Dorsolateral prefrontal cortex (tissue), 120 donors: ENCODE measurements at regions of chr6 and their contacts with region 1.

Region 1: GRCh38 chr6:36759148-36759759 is 61.6 kb downstream of the RAB44 start:
- DNase-seq: peak; percentile 73 to 89 (median 82)
- H3K4me3 ChIP-seq: no peak overlapping the region
- H3K27ac ChIP-seq: peak overlapping the region in 21 of 59 donors; percentile 5 to 98 (median 93)
- H3K27me3 ChIP-seq: no peaks in the 10 kb centered on the region
- CTCF ChIP-seq: peak; percentile 78 to 98 (median 95)

Region 2: GRCh38 chr6:36546920-36547645 is 212.2 kb before region 1 on chr6 and contains the start of gene STK38:
- intact Hi-C with region 1: loop called in 1 of 2 experiments (anchors 5 kb)
- DNase-seq: peak; percentile 72 to 91 (median 84)
- H3K4me3 ChIP-seq: peak within 1 kb of the TSS; percentile 58 to 100 (median 96)
- H3K27ac ChIP-seq: peak within 1 kb of the TSS; percentile 88 to 100 (median 97)
- H3K27me3 ChIP-seq: no peaks in the 10 kb centered on the region
- CTCF ChIP-seq: peak in 39 of 56 donors; percentile 3 to 63 (median 37)
- total RNA-seq, gene STK38: 6.3 to 23.4 (median 13.6) TPM

Region 3: GRCh38 chr6:36623547-36624459 is 135.5 kb before region 1 on chr6:
- intact Hi-C with region 1: loop called (anchors 5 kb)
- DNase-seq: peak; percentile 59 to 83 (median 78)
- H3K4me3 ChIP-seq: no peak overlapping the region
- H3K27ac ChIP-seq: peak overlapping the region in 21 of 59 donors; percentile 10 to 73 (median 55)
- H3K27me3 ChIP-seq: no peaks in the 10 kb centered on the region
- CTCF ChIP-seq: peak; percentile 71 to 94 (median 88)

Region 4: GRCh38 chr6:36720251-36721141 is 38.8 kb before region 1 on chr6:
- intact Hi-C with region 1: no loop called
- DNase-seq: peak in 2 of 10 donors; percentile 2 to 31
- H3K4me3 ChIP-seq: no peak overlapping the region
- H3K27ac ChIP-seq: no peak overlapping the region
- H3K27me3 ChIP-seq: no peaks in the 10 kb centered on the region
- CTCF ChIP-seq: no peak

Region 5: GRCh38 chr6:36979347-36979742 is 220.1 kb after region 1 on chr6:
- intact Hi-C with region 1: loop called (anchors 5 to 10 kb)
- DNase-seq: peak; percentile 49 to 84 (median 79)
- H3K4me3 ChIP-seq: no peak overlapping the region
- H3K27ac ChIP-seq: peak overlapping the region in 58 of 59 donors; percentile 23 to 100 (median 84)
- H3K27me3 ChIP-seq: no peaks in the 10 kb centered on the region
- CTCF ChIP-seq: peak; percentile 28 to 85 (median 72)